HEK293 (cell line): ENCODE measurements at regions of chr10 and their contacts with region 1.

Region 1: DNA sequence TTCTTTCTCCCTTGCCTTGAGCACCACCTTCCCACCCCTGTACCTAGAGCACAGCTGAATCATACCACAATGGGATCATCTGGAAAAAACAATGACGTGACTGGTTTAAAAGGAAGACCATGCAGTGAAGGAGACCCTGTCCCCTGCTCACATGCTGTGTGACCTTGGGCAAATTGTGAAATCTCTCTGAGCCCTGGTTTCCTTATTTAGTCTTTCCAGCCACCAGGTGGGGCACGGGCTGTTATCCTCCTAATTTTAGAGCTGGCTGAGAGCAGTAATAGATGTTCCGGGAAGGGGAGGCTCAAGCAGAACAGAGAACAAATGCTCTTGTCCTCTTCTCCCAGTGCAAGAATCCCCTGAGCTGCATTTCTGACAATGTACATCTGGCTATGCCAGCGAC is 198.3 kb downstream of the RPS24 start:
- H3K4me3 ChIP-seq: no peak overlapping the region
- H3K27ac ChIP-seq: no peak overlapping the region
- H3K4me1 ChIP-seq: no peaks in the 10 kb centered on the region
- CTCF ChIP-seq: peak; percentile 18; the same call in 1 of the 2 replicates

Region 2: GRCh38 chr10:77456414-77456813 is 775.5 kb before region 1 on chr10:
- CTCF ChIA-PET with region 1: no interaction called
- POLR2A ChIA-PET with region 1: no interaction called
- H3K4me3 ChIP-seq: no peak overlapping the region
- H3K27ac ChIP-seq: no peak overlapping the region
- H3K4me1 ChIP-seq: no peaks in the 10 kb centered on the region
- CTCF ChIP-seq: peak; percentile 36; the same call in 1 of the 2 replicates

Region 3: DNA sequence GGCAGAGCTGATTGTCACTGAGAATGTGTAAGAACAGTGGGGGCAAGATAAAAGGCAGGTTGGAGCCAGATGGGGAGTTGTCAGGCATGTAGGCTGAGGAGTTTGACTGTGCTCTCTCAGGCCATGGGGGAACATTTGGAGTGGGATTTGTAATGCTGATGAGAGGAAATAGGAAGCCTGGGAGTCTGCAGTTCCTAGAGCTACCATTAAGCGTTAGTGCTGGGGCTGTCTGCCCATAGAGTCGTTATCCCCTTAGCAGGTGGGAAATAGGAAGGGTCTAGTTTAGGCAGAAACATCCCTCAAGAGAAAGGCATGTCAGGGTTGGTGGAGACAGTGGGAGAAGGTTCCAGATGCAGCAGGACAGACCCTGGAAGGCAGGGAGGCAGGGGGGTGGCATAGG is 122.7 kb before region 1 on chr10:
- CTCF ChIA-PET with region 1: no interaction called
- POLR2A ChIA-PET with region 1: no interaction called
- H3K4me3 ChIP-seq: no peak overlapping the region
- H3K27ac ChIP-seq: no peak overlapping the region
- H3K4me1 ChIP-seq: no peaks in the 10 kb centered on the region
- CTCF ChIP-seq: no peak

Region 4: DNA sequence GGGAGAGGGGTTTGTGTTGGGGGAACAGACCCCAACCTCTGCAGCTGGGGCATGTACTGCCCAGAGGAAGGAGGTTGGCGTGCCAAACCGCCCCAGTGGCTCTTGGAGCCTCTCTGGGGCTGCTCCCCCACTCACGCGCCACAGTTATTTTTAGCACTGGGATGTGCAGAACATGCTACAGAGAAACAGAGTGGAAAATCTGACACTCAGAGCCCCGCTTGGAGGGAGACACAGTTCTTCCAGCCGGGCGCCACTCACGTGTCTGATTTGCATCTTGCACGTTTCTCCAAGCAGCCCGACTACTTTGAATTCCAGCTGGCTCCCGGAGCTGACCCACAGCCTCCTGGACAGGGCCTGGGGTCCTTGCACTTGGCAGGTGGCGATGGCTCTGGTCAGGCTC is 16.3 kb before region 1 on chr10:
- CTCF ChIA-PET with region 1: no interaction called
- POLR2A ChIA-PET with region 1: no interaction called
- H3K4me3 ChIP-seq: no peak overlapping the region
- H3K27ac ChIP-seq: no peak overlapping the region
- H3K4me1 ChIP-seq: no peaks in the 10 kb centered on the region
- CTCF ChIP-seq: no peak

Region 5: GRCh38 chr10:78276139-78276538 is 44.2 kb after region 1 on chr10:
- CTCF ChIA-PET with region 1: interaction called, 11 read pairs
- POLR2A ChIA-PET with region 1: no interaction called
- H3K4me3 ChIP-seq: no peak overlapping the region
- H3K27ac ChIP-seq: no peak overlapping the region
- H3K4me1 ChIP-seq: no peaks in the 10 kb centered on the region
- CTCF ChIP-seq: no peak

Region 6: DNA sequence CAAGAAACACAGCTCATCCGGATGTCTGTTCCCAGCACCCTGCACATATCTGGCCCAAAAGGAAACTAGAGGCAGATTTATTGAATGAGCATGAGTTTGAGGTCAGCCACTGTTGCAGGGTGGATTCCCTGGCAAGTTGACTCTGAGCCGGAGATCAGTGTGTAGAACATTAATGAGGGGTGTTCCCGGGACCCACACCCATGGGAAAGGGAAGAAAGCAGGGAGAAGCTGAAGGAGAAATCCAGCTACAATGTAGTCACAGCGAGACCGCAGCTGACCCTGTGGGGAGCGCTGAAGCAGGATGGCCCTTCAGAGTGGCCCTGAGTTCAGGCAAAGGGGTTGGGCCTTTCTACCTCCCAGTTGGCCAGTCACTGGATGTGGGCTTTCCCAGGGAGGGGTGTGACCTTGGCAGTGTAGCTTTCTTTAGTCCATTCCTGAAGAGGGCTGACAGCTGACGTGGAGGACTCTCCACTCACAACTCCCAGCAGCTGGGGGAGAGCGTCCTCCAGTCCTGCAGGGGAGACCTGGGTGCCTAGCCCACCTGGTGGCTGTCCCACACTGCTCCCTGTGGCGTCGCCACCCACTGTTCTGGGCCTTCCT is 512.7 kb after region 1 on chr10:
- CTCF ChIA-PET with region 1: no interaction called
- POLR2A ChIA-PET with region 1: no interaction called
- H3K4me3 ChIP-seq: no peak overlapping the region
- H3K27ac ChIP-seq: no peak overlapping the region
- H3K4me1 ChIP-seq: 0 out of 2 replicates have a peak, but pooled peaks cover 3% of the 10 kb centered on the region
- CTCF ChIP-seq: no peak